Left ventricle myocardium superior (tissue), 1 donor: ENCODE measurements at regions of chr11 and their contacts with region 1.

Region 1: GRCh38 chr11:65274735-65275682 is 13.2 kb downstream of the POLA2 start:
- DNase-seq: peak; percentile 66
- ATAC-seq: peak; percentile 93

Region 2: DNA sequence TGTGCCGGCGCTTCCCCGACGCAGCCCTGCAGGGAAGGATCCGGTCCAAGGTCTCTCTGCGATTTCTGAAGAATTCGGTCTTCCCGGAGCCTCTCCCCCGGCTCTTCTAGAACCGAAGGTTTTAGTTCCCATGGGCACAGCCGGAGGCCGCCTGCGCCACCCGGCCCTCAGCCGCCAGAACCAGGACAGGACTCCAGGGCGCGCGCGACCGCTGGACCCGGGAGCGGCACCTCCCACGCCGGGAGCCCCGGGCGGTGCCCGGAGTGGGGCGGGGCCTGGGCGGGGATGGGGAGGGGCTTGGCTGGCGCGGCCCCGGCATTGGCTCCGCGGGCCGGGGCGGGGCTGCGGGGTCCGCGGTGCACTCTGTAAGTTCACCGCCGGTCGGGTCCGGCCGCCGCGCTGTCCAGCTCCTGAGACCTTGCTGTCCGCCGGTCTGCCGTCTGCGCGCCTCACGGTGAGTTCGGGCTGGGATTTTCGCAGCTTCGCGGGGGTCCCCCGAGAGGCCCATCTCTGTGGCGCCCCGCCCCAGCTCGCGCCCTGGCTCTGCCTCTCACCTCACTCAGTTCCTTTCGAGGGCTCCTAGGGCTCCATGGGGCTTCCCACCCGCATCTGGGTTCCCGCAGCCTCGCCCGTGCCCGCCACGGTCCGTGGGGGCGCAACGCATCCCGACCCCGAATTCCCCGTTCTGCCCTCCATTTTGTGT is 39.6 kb after region 1 on chr11 and contains the start of gene CDC42EP2:
- intact Hi-C with region 1: loop called (anchors 2 kb)
- DNase-seq: peak; percentile 94
- ATAC-seq: peak; percentile 91
- total RNA-seq, gene CDC42EP2: 13.0 TPM

Region 3: GRCh38 chr11:65817835-65818742 is 543.1 kb after region 1 on chr11:
- intact Hi-C with region 1: no loop called
- DNase-seq: peak; percentile 98
- ATAC-seq: peak; percentile 99